IMR-90 (cell line): ENCODE measurements at regions of chr1 and their contacts with region 1.

Region 1: DNA sequence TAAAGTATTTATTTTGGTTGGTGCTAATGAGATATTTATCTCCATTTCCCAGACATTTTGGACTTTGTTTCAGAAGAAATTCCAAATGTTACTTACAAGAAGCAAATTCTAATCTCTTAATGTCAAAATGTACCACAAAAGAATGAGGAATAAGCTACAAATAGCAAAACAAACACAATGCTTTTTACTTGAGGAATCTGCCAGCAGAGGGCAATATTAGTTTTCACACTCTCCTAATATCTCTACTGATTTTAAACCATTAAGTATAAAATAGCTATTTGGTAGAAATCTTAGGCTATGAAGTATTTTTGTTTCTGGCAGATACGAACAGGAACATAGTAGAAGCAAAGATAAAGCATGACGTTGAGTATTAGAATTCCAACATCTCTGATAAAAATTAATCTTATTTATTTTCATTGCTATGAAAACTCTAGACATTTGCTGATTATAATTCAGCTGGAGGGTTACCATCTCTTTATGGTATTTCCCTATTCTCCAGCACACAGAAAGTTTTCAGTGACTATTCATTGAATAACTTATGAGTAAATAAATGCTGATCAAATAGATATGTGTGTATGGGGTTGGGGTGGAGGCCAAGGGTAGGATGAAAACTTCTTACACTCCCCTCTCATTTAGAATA is 13.4 kb upstream of the HMCN1 start:
- DNase-seq: peak; percentile 64
- ATAC-seq: peak; percentile 49
- H3K4me3 ChIP-seq: no peak overlapping the region
- H3K27ac ChIP-seq: no peak overlapping the region
- H3K4me1 ChIP-seq: peaks cover 4% of the 10 kb centered on the region
- H3K27me3 ChIP-seq: no peaks in the 10 kb centered on the region
- CTCF ChIP-seq: peak; percentile 57
- POLR2A ChIP-seq: no peak
- RAD21 ChIP-seq: peak; percentile 51

Region 2: DNA sequence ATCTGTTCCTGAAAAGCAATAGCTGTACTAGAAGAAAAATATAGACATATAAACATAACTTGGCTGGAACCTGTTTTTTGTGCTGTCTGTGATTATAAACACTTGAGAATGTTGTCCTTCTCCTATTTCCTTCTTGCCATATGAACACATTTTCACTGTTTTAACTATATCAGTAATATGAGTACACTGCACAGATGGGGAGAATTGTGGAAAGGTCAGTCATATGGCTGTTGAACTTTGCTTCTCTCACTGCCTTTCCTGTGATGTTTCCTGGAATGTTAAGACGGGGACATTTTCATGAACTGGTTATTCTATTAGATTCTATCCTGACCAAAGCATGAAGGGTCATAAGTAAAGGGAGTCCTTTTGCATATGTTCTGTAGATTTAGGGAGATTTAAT is 38.3 kb after region 1 on chr1:
- CTCF ChIA-PET with region 1: no interaction called
- POLR2A ChIA-PET with region 1: no interaction called
- dilution Hi-C with region 1: no loop called
- in situ Hi-C with region 1: no loop called
- intact Hi-C with region 1: no loop called
- DNase-seq: peak; percentile 12
- ATAC-seq: peak; percentile 48; the same call in 1 of the 2 replicates
- H3K4me3 ChIP-seq: no peak overlapping the region
- H3K27ac ChIP-seq: no peak overlapping the region
- H3K4me1 ChIP-seq: no peaks in the 10 kb centered on the region
- H3K27me3 ChIP-seq: no peaks in the 10 kb centered on the region
- CTCF ChIP-seq: no peak
- POLR2A ChIP-seq: no peak
- RAD21 ChIP-seq: no peak

Region 3: DNA sequence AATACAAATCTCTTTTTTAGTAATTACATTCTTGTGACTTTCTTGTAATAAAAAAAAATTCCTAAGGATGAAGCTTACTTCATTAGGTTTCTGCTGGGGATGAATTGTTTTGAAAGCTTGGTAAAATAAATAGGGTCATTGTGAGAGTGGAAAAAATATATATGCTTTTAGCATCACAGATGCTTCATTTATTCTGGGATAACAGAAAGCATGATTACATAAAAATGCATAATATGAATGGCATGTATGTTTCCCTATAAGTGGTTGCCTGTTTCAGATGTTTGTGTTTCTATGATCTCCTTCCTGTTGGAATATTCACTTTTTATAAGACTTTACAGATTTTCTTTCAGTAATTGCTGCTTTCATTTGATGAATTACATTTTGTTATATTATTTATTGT is 55.8 kb after region 1 on chr1:
- CTCF ChIA-PET with region 1: no interaction called
- POLR2A ChIA-PET with region 1: interaction called, 10 read pairs
- dilution Hi-C with region 1: no loop called
- in situ Hi-C with region 1: no loop called
- intact Hi-C with region 1: no loop called
- DNase-seq: peak; percentile 27
- ATAC-seq: peak; percentile 68; the same call in 1 of the 2 replicates
- H3K4me3 ChIP-seq: no peak overlapping the region
- H3K27ac ChIP-seq: no peak overlapping the region
- H3K4me1 ChIP-seq: peaks cover 2% of the 10 kb centered on the region; the same call in 1 of the 2 replicates
- H3K27me3 ChIP-seq: no peaks in the 10 kb centered on the region
- CTCF ChIP-seq: no peak
- POLR2A ChIP-seq: no peak
- RAD21 ChIP-seq: no peak

Region 4: DNA sequence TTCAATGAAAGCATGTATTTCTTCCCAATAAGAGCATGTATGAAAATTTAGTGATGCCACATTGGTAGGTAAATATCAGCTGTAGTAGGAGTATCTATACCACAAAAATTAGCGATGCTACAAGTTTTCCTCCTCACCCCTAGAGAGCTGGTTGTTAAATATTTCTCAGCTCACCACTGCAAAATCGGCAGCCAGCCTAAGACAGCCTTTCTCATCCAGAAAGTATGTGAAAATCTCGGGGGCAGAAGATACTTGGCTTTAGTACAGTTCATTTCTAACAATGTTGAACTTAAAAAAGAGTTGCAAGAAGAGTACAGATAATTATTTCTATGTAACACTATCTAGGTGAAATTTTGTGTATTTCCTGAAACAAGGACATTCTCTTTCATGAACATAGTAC is 418.9 kb after region 1 on chr1:
- CTCF ChIA-PET with region 1: no interaction called
- POLR2A ChIA-PET with region 1: no interaction called
- dilution Hi-C with region 1: no loop called
- in situ Hi-C with region 1: no loop called
- intact Hi-C with region 1: no loop called
- DNase-seq: peak; percentile 57
- ATAC-seq: peak; percentile 68
- H3K4me3 ChIP-seq: no peak overlapping the region
- H3K27ac ChIP-seq: no peak overlapping the region
- H3K4me1 ChIP-seq: no peaks in the 10 kb centered on the region
- H3K27me3 ChIP-seq: no peaks in the 10 kb centered on the region
- CTCF ChIP-seq: no peak
- POLR2A ChIP-seq: no peak
- RAD21 ChIP-seq: no peak